ENCODE measurements at regions of chr10 and their contacts with region 1.

Region 1: GRCh38 chr10:4561296-4561695 is 264.7 kb upstream of the AKR1E2 start:
- DNase-seq: no peak
- H3K4me3 ChIP-seq: no peak overlapping the region
- H3K27ac ChIP-seq: no peak overlapping the region
- H3K4me1 ChIP-seq: no peaks in the 10 kb centered on the region
- H3K27me3 ChIP-seq: no peaks in the 10 kb centered on the region
- CTCF ChIP-seq: no peak

Region 2: DNA sequence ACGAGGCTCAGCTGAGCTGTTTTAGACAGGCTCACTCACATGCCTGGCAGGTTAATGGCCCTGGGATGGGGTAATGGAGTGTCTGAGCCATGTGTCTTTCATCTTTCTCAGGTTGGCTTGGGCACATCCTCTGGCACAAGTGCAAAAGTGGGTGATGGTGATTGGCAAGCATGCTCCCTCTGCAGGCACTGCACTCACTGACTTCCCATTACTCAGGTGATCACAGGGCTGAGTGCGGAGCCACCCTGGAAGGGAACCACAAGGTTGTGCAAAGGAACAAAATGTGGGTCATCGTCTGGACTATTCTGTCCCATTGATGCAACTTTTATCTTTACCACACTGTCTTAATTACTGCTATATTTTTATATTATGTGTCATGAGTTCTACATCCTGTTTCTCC is 20.6 kb after region 1 on chr10:
- CTCF ChIA-PET with region 1: interaction called, 10 read pairs
- dilution Hi-C with region 1: no loop called
- in situ Hi-C with region 1: no loop called
- intact Hi-C with region 1: no loop called
- DNase-seq: no peak
- H3K4me3 ChIP-seq: no peak overlapping the region
- H3K27ac ChIP-seq: no peak overlapping the region
- H3K4me1 ChIP-seq: no peaks in the 10 kb centered on the region
- H3K27me3 ChIP-seq: no peaks in the 10 kb centered on the region
- CTCF ChIP-seq: no peak